ENCODE measurements at regions of chr2 and their contacts with region 1.

Region 1: DNA sequence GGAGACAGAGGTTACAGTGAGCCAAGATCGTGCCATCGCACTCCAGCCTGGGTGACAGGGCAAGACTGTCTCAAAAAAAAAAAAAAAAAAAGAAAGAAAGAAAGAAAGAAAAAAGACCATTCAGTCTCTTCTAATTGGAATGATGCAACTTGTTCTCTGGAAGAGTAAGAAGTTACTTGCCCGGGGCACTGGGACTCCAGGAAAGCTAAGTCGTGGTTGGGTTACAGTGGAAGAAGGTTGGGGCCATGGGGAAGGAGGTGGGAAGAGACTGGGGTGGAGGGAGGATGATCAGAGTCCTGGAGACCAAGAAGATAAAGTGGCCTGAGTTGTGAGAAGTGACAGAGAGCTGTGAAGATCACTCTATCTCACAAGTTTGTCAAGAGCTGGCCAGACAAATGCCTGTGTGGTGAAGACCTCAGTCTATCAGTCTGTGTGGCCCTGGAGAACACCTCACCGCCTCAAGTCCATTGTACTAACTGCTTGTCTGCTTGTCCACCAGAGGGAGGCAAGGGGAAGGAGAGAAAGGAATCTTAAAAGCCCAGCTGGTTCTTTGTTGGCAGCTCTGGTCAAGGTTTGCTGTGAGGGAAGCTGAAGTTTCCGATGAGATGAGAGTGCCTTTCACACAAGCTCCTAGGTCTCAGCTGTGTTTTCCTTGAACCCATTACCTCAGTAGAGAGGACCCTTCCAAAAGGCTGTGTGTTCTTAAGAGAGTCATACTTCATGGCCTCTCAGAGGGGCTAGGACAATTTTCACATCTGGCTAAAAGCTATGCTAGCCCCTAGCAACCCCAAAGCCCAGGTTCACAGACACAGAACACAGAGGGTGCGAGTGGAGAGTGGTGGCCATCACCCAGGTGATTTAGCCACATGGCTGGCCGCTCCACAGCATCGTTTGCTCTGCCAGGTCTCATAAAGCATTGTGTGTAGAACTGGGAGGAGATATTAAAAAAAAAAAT is 72.0 kb upstream of the TMEM178A start:
- DNase-seq: peak; percentile 74
- H3K4me3 Mint-ChIP-seq: no peak overlapping the region
- H3K27ac Mint-ChIP-seq: peak overlapping the region; percentile 63
- H3K4me1 Mint-ChIP-seq: peaks cover 9% of the 10 kb centered on the region
- H3K27me3 Mint-ChIP-seq: no peaks in the 10 kb centered on the region
- CTCF ChIP-seq: peak; percentile 36

Region 2: DNA sequence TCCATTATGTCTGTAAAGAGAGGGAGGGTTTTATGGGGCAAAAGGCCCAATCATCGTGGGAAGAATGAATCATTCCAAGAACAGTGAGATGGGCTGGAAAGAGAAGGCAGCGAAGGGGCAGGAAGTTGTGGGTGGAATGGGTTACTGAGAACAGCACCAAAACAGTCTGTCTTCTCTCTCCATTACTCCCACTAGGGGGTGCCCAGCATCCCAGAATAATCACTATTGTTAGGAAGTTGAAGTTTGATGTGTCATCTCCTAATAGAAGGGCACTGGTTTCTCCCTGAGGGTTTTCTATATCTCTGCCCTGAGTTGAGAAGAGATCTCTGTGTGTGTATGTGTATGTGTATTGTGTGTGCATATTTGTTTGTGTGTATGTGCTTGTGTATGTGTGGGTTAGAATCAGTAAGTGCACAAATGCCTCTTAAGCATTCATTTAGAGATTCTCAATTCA is 80.0 kb before region 1 on chr2:
- CTCF ChIA-PET with region 1: interaction called, 5 read pairs
- POLR2A ChIA-PET with region 1: no interaction called
- intact Hi-C with region 1: loop called (anchors 5 kb)
- DNase-seq: peak; percentile 92
- H3K4me3 Mint-ChIP-seq: no peak overlapping the region
- H3K27ac Mint-ChIP-seq: peak overlapping the region; percentile 90
- H3K4me1 Mint-ChIP-seq: peaks cover 30% of the 10 kb centered on the region
- H3K27me3 Mint-ChIP-seq: no peaks in the 10 kb centered on the region
- CTCF ChIP-seq: peak; percentile 55

Region 3: GRCh38 chr2:39571111-39571731 is 22.5 kb before region 1 on chr2:
- CTCF ChIA-PET with region 1: interaction called, 16 read pairs
- POLR2A ChIA-PET with region 1: no interaction called
- intact Hi-C with region 1: no loop called
- DNase-seq: no peak
- H3K4me3 Mint-ChIP-seq: no peak overlapping the region
- H3K27ac Mint-ChIP-seq: peak overlapping the region; percentile 13
- H3K4me1 Mint-ChIP-seq: peaks cover 20% of the 10 kb centered on the region
- H3K27me3 Mint-ChIP-seq: no peaks in the 10 kb centered on the region
- CTCF ChIP-seq: no peak

Region 4: GRCh38 chr2:39696838-39697237 is 103.1 kb after region 1 on chr2:
- CTCF ChIA-PET with region 1: interaction called, 44 read pairs
- POLR2A ChIA-PET with region 1: no interaction called
- intact Hi-C with region 1: loop called (anchors 1 kb)
- DNase-seq: peak; percentile 25
- H3K4me3 Mint-ChIP-seq: no peak overlapping the region
- H3K27ac Mint-ChIP-seq: no peak overlapping the region
- H3K4me1 Mint-ChIP-seq: peaks cover 14% of the 10 kb centered on the region
- H3K27me3 Mint-ChIP-seq: no peaks in the 10 kb centered on the region
- CTCF ChIP-seq: peak; percentile 45